Endothelial cell of umbilical vein (primary cell): ENCODE measurements at regions of chr1 and their contacts with region 1.

Region 1: GRCh38 chr1:64567426-64568170 is 97.7 kb downstream of the CACHD1 start:
- DNase-seq: no peak
- H3K4me3 ChIP-seq: no peak overlapping the region
- H3K27ac ChIP-seq: no peak overlapping the region
- H3K4me1 ChIP-seq: no peaks in the 10 kb centered on the region
- H3K27me3 ChIP-seq: no peaks in the 10 kb centered on the region
- CTCF ChIP-seq: no peak
- POLR2A ChIP-seq: no peak

Region 2: GRCh38 chr1:64553281-64553680 is 14.3 kb before region 1 on chr1:
- CTCF ChIA-PET with region 1: no interaction called
- POLR2A ChIA-PET with region 1: no interaction called
- dilution Hi-C with region 1: no loop called
- intact Hi-C with region 1: no loop called
- DNase-seq: no peak
- H3K4me3 ChIP-seq: no peak overlapping the region
- H3K27ac ChIP-seq: no peak overlapping the region
- H3K4me1 ChIP-seq: no peaks in the 10 kb centered on the region
- H3K27me3 ChIP-seq: no peaks in the 10 kb centered on the region
- CTCF ChIP-seq: no peak
- POLR2A ChIP-seq: no peak

Region 3: GRCh38 chr1:64578270-64578973 is 10.8 kb after region 1 on chr1:
- CTCF ChIA-PET with region 1: interaction called, 10 read pairs
- POLR2A ChIA-PET with region 1: no interaction called
- dilution Hi-C with region 1: no loop called
- intact Hi-C with region 1: no loop called
- DNase-seq: no peak
- H3K4me3 ChIP-seq: no peak overlapping the region
- H3K27ac ChIP-seq: no peak overlapping the region
- H3K4me1 ChIP-seq: no peaks in the 10 kb centered on the region
- H3K27me3 ChIP-seq: no peaks in the 10 kb centered on the region
- CTCF ChIP-seq: no peak
- POLR2A ChIP-seq: no peak

Region 4: GRCh38 chr1:64594446-64594845 is 26.8 kb after region 1 on chr1:
- CTCF ChIA-PET with region 1: no interaction called
- POLR2A ChIA-PET with region 1: no interaction called
- dilution Hi-C with region 1: no loop called
- intact Hi-C with region 1: no loop called
- DNase-seq: no peak
- H3K4me3 ChIP-seq: no peak overlapping the region
- H3K27ac ChIP-seq: no peak overlapping the region
- H3K4me1 ChIP-seq: no peaks in the 10 kb centered on the region
- H3K27me3 ChIP-seq: no peaks in the 10 kb centered on the region
- CTCF ChIP-seq: no peak
- POLR2A ChIP-seq: no peak